Gastrocnemius medialis (tissue), 4 donors: ENCODE measurements at regions of chr14 and their contacts with region 1.

Region 1: GRCh38 chr14:55579724-55580469 is at the start of gene KTN1:
- DNase-seq: peak; percentile 78 to 84
- ATAC-seq: peak; percentile 76 to 79
- H3K4me3 ChIP-seq: peak within 1 kb of the TSS; percentile 88 to 98 (median 97)
- H3K27ac ChIP-seq: peak within 1 kb of the TSS; percentile 98 to 99 (median 98)
- H3K4me1 ChIP-seq: peaks cover 45% of the 10 kb centered on the region in 2 donors
- H3K27me3 ChIP-seq: no peaks in the 10 kb centered on the region
- CTCF ChIP-seq: no peak
- POLR2A ChIP-seq: peak; percentile 91 to 96
- total RNA-seq, gene KTN1: 256 to 373 (median 327) TPM

Region 2: DNA sequence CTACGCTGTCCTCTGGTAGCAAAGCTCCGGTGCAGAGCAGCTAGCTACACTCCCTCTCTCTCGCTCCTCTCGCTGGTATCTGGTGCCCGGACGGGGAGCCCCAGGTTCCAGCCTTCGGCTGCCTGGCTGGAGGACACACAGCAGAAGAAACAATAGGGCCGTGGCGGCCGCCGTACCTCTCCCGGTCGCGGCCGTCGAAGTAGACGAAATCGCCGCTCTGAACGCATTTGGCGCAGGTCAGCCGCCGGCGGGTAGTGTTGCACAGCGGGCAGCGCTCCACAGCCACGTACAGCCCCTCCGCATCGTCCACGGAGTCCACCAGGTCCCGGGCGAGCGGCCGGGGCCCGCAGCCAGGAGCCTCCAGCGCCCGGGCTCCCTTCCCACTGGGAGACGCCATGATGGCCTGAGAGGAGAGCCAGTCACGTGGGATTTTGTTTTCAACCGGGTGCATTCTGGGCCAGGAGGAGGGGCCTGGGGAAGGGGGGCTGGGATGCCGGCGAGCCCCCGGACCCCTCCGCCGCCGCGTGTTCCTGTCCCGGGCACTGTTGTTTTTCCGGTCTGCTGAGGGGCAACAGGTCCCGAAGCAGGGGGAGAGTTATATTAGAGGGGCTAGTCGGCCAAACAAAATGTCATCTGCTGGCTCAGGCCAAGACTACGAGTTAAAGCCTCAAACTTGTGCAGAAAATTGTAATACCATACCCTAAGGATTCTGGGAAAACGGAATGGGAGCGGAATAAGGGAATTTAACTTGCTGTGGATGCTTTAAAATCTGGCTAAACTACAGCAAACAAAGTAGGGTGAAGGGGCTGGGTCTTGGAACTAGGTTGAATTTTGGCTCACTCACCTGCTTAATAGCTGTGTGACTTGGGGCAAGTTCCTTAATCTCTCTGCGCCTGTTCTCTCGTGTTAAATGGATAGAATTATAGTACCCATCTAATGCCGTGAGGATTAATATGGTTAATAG is 168.2 kb before region 1 on chr14 and contains the start of gene ATG14:
- in situ Hi-C with region 1: no loop called
- intact Hi-C with region 1: loop called (anchors 5 kb)
- DNase-seq: peak; percentile 81 to 88
- ATAC-seq: peak; percentile 94 to 98
- H3K4me3 ChIP-seq: peak within 1 kb of the TSS; percentile 82 to 98 (median 90)
- H3K27ac ChIP-seq: peak within 1 kb of the TSS; percentile 87 to 97 (median 95)
- H3K4me1 ChIP-seq: peaks cover 26 to 28% of the 10 kb centered on the region in 2 donors
- H3K27me3 ChIP-seq: no peaks in the 10 kb centered on the region
- CTCF ChIP-seq: peak in 2 of 5 experiments; percentile 9 to 15
- POLR2A ChIP-seq: peak; percentile 47 to 84
- total RNA-seq, gene ATG14: 12.6 to 20.0 (median 15.6) TPM

Region 3: GRCh38 chr14:55599200-55599879 is 19.4 kb after region 1 on chr14:
- in situ Hi-C with region 1: no loop called
- intact Hi-C with region 1: no loop called
- DNase-seq: no peak
- ATAC-seq: peak in 1 of 2 donors; percentile 19
- H3K4me3 ChIP-seq: no peak overlapping the region
- H3K27ac ChIP-seq: peak overlapping the region in 2 of 4 donors; percentile 52 to 80
- H3K4me1 ChIP-seq: peaks cover 54 to 65% of the 10 kb centered on the region in 2 donors
- H3K27me3 ChIP-seq: no peaks in the 10 kb centered on the region
- CTCF ChIP-seq: no peak
- POLR2A ChIP-seq: no peak

Region 4: GRCh38 chr14:55684956-55685584 is 105.2 kb after region 1 on chr14:
- in situ Hi-C with region 1: no loop called
- intact Hi-C with region 1: loop called (anchors 2 kb)
- DNase-seq: peak; percentile 80 to 81
- ATAC-seq: peak; percentile 98 to 99
- H3K4me3 ChIP-seq: no peak overlapping the region
- H3K27ac ChIP-seq: peak overlapping the region; percentile 83 to 95 (median 88)
- H3K4me1 ChIP-seq: peaks cover 18 to 25% of the 10 kb centered on the region in 2 donors
- H3K27me3 ChIP-seq: no peaks in the 10 kb centered on the region
- CTCF ChIP-seq: no peak
- POLR2A ChIP-seq: no peak

Region 5: DNA sequence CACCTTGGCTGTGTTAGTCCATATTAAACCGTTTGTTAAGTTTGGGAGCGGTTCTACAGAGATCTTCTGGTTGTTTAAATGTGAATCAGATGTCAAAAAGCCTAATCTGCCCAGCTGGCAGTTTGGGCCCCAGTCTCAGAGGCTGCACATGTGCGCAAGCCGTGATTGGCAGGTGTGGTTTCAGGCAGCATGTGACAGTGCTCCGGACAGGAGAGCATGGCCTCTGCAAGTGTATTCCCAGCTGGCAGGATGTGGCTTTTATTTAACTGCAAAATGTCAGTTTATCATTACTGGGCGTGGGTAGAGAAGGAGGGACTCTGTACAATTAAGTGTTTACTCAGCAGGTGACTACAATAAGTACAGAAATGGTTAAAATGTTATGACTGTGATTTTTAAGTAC is 615.8 kb after region 1 on chr14:
- in situ Hi-C with region 1: no loop called
- intact Hi-C with region 1: no loop called
- DNase-seq: peak in 1 of 2 donors; percentile 30
- ATAC-seq: peak; percentile 43 to 58
- H3K4me3 ChIP-seq: no peak overlapping the region
- H3K27ac ChIP-seq: peak overlapping the region in 3 of 4 donors; percentile 19 to 41 (median 39)
- H3K4me1 ChIP-seq: peaks cover 9 to 24% of the 10 kb centered on the region in 2 donors
- H3K27me3 ChIP-seq: no peaks in the 10 kb centered on the region
- CTCF ChIP-seq: no peak
- POLR2A ChIP-seq: no peak